WTC11 (cell line): ENCODE measurements at regions of chr19 and their contacts with region 1.

Region 1: GRCh38 chr19:40305403-40305802 is 20.3 kb upstream of the AKT2 start:
- DNase-seq: peak; percentile 81
- ATAC-seq: peak; percentile 65
- H3K4me3 Mint-ChIP-seq: no peak overlapping the region
- H3K27ac Mint-ChIP-seq: peak overlapping the region; percentile 3; the same call in 1 of the 2 replicates
- H3K4me1 Mint-ChIP-seq: peaks cover 12% of the 10 kb centered on the region
- H3K27me3 Mint-ChIP-seq: no peaks in the 10 kb centered on the region
- CTCF ChIP-seq: peak; percentile 46; the same call in 1 of the 2 replicates

Region 2: GRCh38 chr19:40165362-40165937 is 140.0 kb before region 1 on chr19:
- CTCF ChIA-PET with region 1: interaction called, 13 read pairs
- POLR2A ChIA-PET with region 1: no interaction called
- DNase-seq: peak; percentile 90
- ATAC-seq: peak; percentile 99
- H3K4me3 Mint-ChIP-seq: no peak overlapping the region
- H3K27ac Mint-ChIP-seq: 0 out of 2 replicates have a peak overlapping the region, but pooled peaks have one; percentile 78
- H3K4me1 Mint-ChIP-seq: peaks cover 4% of the 10 kb centered on the region
- H3K27me3 Mint-ChIP-seq: no peaks in the 10 kb centered on the region; the same call in 1 of the 2 replicates
- CTCF ChIP-seq: peak; percentile 79

Region 3: DNA sequence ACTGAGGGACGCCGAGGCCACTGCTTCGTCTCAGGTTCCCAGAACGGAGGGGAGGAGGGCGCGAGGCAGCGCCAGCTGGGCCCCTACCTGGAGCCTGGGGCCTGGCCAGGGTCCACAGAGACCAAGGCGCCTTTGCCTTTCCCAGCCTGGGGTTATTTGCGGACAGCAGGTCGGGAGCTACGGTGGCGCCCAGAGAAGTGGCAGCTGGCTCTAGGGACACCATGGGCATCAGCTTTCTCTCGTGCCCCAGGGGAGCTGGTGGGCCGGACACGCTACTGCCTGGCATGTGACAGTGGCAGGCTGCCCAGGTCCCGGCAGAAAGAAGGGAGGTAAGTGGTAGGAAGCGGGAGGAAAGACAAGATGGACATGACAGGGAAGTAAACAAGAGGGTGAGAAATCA is 39.3 kb before region 1 on chr19:
- CTCF ChIA-PET with region 1: no interaction called
- POLR2A ChIA-PET with region 1: no interaction called
- DNase-seq: no peak
- ATAC-seq: no peak
- H3K4me3 Mint-ChIP-seq: no peak overlapping the region
- H3K27ac Mint-ChIP-seq: no peak overlapping the region; the same call in 1 of the 2 replicates
- H3K4me1 Mint-ChIP-seq: peaks cover 20% of the 10 kb centered on the region
- H3K27me3 Mint-ChIP-seq: no peaks in the 10 kb centered on the region
- CTCF ChIP-seq: no peak

Region 4: DNA sequence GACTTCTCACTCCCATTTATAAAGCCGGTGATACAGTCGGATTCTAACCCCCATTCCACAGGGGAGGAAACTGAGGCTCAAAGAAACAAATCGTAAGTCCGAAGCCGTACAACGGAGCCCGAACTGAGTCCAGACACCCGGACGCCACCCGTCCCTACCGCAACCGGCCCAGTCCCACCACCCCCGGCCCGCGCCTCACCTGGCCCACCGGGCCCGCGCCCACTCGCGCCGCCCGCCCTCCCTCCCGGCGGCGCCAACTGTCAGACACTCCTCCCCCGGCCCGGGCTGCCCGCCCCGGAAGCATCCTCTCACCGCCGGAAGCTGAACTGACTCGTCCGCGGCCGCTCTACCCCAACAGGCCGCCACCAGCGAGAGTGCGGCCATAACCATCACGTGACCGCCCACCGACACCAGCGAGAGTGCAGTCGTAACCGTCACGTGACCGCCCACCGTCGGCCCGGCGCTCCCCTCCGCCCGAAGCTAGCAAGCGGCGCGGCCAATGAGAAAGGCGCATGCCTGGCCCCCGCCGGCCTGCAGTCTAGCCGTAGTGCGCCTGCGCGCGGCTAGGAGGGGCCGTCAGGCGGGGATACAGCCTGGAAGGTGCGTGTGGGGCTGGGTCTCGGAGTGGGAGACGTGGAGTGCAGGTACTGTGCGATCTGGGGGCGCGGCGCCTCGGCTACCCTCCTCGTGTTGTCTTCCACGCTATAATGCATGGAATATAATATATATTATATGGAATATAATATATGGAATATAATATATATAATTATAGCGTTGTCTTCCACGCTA is 42.9 kb after region 1 on chr19 and contains the starts of genes C19orf47 and PLD3:
- CTCF ChIA-PET with region 1: interaction called, 10 read pairs
- POLR2A ChIA-PET with region 1: no interaction called
- DNase-seq: peak; percentile 99
- ATAC-seq: peak; percentile 97
- H3K4me3 Mint-ChIP-seq: peak within 1 kb of the TSS; percentile 90
- H3K27ac Mint-ChIP-seq: peak within 1 kb of the TSS; percentile 94
- H3K4me1 Mint-ChIP-seq: peaks cover 11% of the 10 kb centered on the region
- H3K27me3 Mint-ChIP-seq: no peaks in the 10 kb centered on the region
- CTCF ChIP-seq: no peak
- total RNA-seq, gene C19orf47: 14.7 to 17.2 TPM (median 15.6 TPM) in 3 replicates
- total RNA-seq, gene PLD3: 190 to 200 TPM (median 193 TPM) in 3 replicates

Region 5: DNA sequence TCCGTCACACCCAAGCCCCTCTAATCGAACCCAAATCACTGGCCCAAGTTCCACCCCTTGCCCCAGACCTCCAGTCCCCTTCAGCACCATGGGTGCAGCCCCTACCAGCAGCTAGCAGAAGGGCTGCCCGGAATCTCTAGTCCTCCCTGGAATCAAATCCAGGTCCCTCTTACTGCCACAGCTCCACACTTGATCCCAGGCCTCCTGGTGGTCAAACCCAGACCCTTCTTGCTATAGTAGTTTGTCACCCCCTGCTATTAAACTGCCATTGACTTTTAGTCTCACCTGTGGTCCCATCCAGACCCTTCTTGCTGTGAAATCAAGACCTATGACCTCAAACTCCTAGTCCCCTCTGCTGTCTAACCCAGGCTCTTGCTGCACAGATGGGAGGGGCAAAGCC is 75.9 kb after region 1 on chr19:
- CTCF ChIA-PET with region 1: interaction called, 18 read pairs
- POLR2A ChIA-PET with region 1: no interaction called
- DNase-seq: no peak
- ATAC-seq: peak; percentile 71
- H3K4me3 Mint-ChIP-seq: no peak overlapping the region
- H3K27ac Mint-ChIP-seq: peak overlapping the region; percentile 45; the same call in 1 of the 2 replicates
- H3K4me1 Mint-ChIP-seq: 0 out of 2 replicates have a peak, but pooled peaks cover 4% of the 10 kb centered on the region
- H3K27me3 Mint-ChIP-seq: no peaks in the 10 kb centered on the region
- CTCF ChIP-seq: no peak

Region 6: GRCh38 chr19:40444192-40445028 is 139.0 kb after region 1 on chr19 and contains the start of gene SERTAD3:
- CTCF ChIA-PET with region 1: interaction called, 13 read pairs
- POLR2A ChIA-PET with region 1: no interaction called
- DNase-seq: peak; percentile 97
- ATAC-seq: peak; percentile 68
- H3K4me3 Mint-ChIP-seq: peak within 1 kb of the TSS; percentile 94
- H3K27ac Mint-ChIP-seq: peak within 1 kb of the TSS; percentile 99
- H3K4me1 Mint-ChIP-seq: peaks cover 27% of the 10 kb centered on the region
- H3K27me3 Mint-ChIP-seq: no peaks in the 10 kb centered on the region
- CTCF ChIP-seq: no peak
- total RNA-seq, gene SERTAD3: 31.9 to 34.6 TPM (median 33.6 TPM) in 3 replicates

Region 7: DNA sequence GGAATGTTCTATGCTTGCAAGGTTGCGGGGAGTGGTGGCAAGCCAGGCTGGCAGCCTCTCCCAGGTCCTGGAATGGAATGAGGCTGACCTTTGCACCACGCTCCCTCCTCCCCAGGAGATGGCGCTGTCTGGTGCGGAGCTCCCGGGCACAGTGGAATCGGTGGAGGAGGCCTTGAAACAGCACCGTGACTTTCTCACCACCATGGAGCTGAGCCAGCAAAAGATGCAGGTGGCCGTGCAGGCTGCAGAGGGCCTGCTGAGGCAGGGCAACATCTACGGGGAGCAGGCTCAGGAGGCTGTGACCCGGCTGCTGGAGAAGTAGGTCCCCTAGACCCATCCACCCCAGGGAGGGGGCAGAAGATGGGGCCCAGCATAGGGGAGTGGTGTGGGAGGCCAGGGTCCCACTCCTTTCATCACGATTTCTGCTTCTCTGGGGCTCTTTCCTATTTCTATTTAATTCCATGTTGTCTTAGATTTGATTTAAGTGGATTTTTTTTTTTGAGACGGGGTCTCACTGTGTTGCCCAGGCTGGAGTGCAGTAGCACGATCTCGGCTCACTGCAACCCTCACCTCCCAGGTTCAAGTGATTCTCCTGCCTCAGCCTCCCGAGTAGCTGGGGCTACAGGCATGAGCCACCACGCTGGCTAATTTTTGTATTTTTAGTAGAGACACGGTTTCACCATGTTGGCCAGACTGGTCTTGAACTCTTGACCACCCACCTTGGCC is 218.1 kb after region 1 on chr19:
- CTCF ChIA-PET with region 1: interaction called, 13 read pairs
- POLR2A ChIA-PET with region 1: no interaction called
- DNase-seq: peak; percentile 87
- ATAC-seq: peak; percentile 91
- H3K4me3 Mint-ChIP-seq: no peak overlapping the region
- H3K27ac Mint-ChIP-seq: no peak overlapping the region
- H3K4me1 Mint-ChIP-seq: peaks cover 6% of the 10 kb centered on the region
- H3K27me3 Mint-ChIP-seq: peaks cover 65% of the 10 kb centered on the region
- CTCF ChIP-seq: peak; percentile 75